HEK293 (cell line): ENCODE measurements at regions of chr2 and their contacts with region 1.

Region 1: DNA sequence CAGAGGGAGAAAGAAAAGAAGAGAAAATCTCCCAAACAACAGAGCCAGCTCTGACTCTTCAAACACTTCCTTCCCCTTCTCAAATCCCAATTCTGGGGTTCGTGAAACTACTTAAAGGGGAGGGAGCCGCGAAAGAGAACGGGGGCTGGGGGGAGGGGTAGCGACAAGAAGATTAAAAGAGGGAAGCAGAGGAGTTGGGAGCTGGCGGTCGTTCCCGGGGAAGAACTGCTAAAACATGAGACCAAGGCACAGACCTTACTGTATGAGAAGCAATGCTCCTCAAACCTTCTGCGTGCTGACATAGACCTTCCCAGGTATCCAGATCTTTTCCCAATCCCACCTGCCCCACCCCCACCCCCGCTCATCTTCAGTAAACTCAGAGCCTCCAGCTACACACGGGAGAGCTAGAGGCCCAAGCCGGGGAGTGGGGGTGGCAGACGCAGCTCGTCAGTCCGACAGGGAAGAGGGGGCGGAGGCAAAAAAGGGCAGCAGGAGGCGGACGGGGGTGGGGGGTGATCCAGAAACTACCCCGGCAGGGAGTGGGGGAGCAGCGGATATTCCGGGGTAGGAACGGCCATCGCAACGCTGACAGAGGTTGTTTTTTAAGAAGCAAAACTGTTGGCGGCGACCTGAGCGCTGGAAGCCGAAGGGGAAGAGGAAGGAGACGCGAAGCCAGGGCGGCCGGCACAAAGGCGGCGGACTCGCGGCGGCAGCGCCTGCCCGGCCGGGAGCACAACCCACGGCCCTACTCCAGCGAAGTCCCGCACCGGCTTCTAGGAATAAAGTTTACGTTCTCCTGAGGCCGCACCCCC is 1.0 kb downstream of the BAZ2B start:
- H3K4me3 ChIP-seq: peak overlapping the region; percentile 93
- H3K27ac ChIP-seq: peak overlapping the region; percentile 96
- H3K4me1 ChIP-seq: peaks cover 30% of the 10 kb centered on the region
- CTCF ChIP-seq: no peak; the same call in none of the 2 replicates

Region 2: DNA sequence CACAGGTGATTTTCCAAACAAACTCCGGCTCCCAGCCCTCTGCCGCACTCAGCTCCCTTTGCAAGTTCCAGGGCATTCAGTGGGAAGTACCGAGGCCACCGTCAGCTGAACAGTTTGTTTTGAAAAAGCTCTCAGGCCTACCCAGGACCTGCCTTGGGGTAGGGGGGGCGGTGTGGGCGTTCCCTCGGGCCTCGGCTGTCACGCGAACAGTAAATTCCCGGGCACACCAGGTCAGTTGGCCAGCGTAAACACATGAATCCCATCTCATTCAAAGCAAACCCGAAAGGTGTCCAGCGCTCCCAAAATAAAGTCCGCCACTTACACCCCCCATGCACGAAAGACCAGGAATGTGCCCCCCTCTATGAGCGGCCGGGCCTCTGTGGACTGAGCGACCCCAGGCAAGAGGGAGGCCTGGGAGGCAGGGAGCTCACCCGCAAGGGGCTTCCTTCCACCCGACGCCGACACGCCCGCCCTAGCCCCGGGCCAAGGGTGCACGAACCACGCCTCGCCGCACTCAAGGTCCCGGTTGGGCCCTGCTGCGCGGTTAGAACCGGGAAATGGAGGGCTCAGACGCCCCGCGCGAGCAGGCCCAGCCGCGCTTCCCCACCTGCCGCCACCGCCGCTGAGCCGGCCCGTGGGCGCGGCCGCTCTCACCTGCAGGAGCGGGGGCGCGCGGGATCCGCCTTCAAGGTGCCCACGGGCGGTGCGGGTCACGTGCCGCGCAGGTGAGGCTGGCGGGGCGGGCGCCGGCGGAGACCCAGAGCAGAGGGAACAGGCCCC is 329.2 kb before region 1 on chr2 and contains the start of gene WDSUB1:
- CTCF ChIA-PET with region 1: no interaction called
- POLR2A ChIA-PET with region 1: interaction called, 12 read pairs
- H3K4me3 ChIP-seq: peak within 1 kb of the TSS; percentile 90
- H3K27ac ChIP-seq: peak within 1 kb of the TSS; percentile 87
- H3K4me1 ChIP-seq: peaks cover 16% of the 10 kb centered on the region; the same call in 1 of the 2 replicates
- CTCF ChIP-seq: 0 out of 2 replicates have a peak, but pooled peaks have one; percentile 20

Region 3: DNA sequence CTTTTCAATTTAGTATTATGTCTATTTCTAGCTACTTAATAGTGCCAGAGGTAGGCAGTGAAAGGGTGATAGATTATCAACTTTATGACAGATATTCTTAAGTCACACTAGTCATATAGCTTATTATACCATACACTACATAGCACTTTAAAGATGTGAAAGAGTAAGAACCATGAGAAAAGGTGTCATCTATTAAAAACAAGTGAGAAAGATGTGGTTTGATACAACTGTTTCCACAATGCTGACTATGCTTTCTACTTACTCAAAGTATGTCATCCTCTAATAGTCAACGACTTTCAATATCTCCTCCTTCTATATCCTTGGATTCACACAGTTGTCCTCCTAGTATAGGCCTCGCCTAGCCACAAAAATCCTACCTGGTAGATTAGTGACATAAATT is 195.9 kb before region 1 on chr2:
- CTCF ChIA-PET with region 1: no interaction called
- POLR2A ChIA-PET with region 1: no interaction called
- H3K4me3 ChIP-seq: no peak overlapping the region
- H3K27ac ChIP-seq: no peak overlapping the region
- H3K4me1 ChIP-seq: no peaks in the 10 kb centered on the region
- CTCF ChIP-seq: no peak

Region 4: DNA sequence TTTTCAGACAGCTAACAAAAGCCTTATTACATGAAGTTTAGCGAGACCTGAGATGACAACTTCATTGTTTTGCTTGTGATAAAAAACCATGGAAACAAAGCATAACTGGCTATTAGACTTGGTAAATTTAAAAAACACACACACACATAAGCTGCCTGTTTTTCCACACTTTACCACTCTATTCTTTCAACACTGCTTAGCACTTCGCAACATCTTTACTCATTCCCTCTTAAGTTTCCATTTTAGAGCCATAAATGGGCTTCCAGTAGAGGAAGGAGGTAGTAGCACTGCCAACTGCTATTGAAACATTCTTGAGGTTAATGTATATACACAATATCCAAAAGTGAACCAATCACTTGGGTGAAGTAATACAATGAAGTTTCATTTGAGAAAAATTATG is 53.1 kb before region 1 on chr2:
- CTCF ChIA-PET with region 1: no interaction called
- POLR2A ChIA-PET with region 1: no interaction called
- H3K4me3 ChIP-seq: no peak overlapping the region
- H3K27ac ChIP-seq: no peak overlapping the region
- H3K4me1 ChIP-seq: no peaks in the 10 kb centered on the region
- CTCF ChIP-seq: no peak

Region 5: GRCh38 chr2:159637971-159638501 is 22.7 kb after region 1 on chr2:
- CTCF ChIA-PET with region 1: no interaction called
- POLR2A ChIA-PET with region 1: interaction called, 17 read pairs
- H3K4me3 ChIP-seq: no peak overlapping the region
- H3K27ac ChIP-seq: no peak overlapping the region
- H3K4me1 ChIP-seq: no peaks in the 10 kb centered on the region
- CTCF ChIP-seq: no peak

Region 6: GRCh38 chr2:159712143-159712928 is 97.0 kb after region 1 on chr2 and contains the start of gene MARCHF7:
- CTCF ChIA-PET with region 1: interaction called, 8 read pairs
- POLR2A ChIA-PET with region 1: interaction called, 64 read pairs
- H3K4me3 ChIP-seq: peak within 1 kb of the TSS; percentile 100
- H3K27ac ChIP-seq: peak within 1 kb of the TSS; percentile 95
- H3K4me1 ChIP-seq: no peaks in the 10 kb centered on the region; the same call in 1 of the 2 replicates
- CTCF ChIP-seq: peak; percentile 97

Region 7: GRCh38 chr2:159738509-159739390 is 123.4 kb after region 1 on chr2:
- CTCF ChIA-PET with region 1: no interaction called
- POLR2A ChIA-PET with region 1: no interaction called
- H3K4me3 ChIP-seq: no peak overlapping the region
- H3K27ac ChIP-seq: no peak overlapping the region
- H3K4me1 ChIP-seq: no peaks in the 10 kb centered on the region
- CTCF ChIP-seq: no peak